ENCODE measurements at regions of chr3 and their contacts with region 1.

Region 1: DNA sequence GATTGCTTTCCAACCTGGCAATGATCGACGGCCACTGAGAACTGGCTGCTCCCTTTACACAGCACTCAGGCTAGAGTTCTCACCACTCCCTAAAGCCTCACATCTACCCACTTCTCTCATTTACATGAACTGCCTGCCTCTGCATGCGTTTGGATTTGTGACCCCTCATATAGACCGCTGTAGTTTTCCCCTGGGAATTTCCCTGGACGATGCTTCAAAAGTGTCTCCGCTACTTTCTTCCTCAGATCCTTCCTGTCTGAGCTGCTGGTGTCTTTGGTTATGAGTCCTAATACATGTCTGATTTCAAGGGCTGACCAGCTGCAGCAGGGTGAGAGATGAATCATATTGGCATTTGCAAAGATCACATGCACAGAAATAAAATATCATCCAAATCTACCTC is 116.7 kb upstream of the ETV5 start:
- DNase-seq: no peak
- ATAC-seq: no peak
- H3K4me3 ChIP-seq: no peak overlapping the region
- H3K27ac ChIP-seq: no peak overlapping the region
- H3K4me1 ChIP-seq: peaks cover 0 to 17% (median 3%) of the 10 kb centered on the region in 12 donors
- H3K27me3 ChIP-seq: no peaks in the 10 kb centered on the region
- CTCF ChIP-seq: no peak
- POLR2A ChIP-seq: no peak

Region 2: GRCh38 chr3:186209810-186210752 is 15.5 kb before region 1 on chr3:
- intact Hi-C with region 1: loop called in 1 of 10 experiments (anchors 1 kb)
- DNase-seq: peak; percentile 66 to 86 (median 74)
- ATAC-seq: peak; percentile 87 to 92 (median 90)
- H3K4me3 ChIP-seq: peak overlapping the region in 2 of 12 donors; percentile 13 to 14
- H3K27ac ChIP-seq: peak overlapping the region; percentile 17 to 81 (median 74)
- H3K4me1 ChIP-seq: peaks cover 0 to 56% (median 26%) of the 10 kb centered on the region in 12 donors
- H3K27me3 ChIP-seq: no peaks in the 10 kb centered on the region
- CTCF ChIP-seq: no peak
- POLR2A ChIP-seq: no peak

Measured in heart left ventricle (tissue), 16 donors.